ENCODE measurements at regions of chr2 and their contacts with region 1.

Region 1: DNA sequence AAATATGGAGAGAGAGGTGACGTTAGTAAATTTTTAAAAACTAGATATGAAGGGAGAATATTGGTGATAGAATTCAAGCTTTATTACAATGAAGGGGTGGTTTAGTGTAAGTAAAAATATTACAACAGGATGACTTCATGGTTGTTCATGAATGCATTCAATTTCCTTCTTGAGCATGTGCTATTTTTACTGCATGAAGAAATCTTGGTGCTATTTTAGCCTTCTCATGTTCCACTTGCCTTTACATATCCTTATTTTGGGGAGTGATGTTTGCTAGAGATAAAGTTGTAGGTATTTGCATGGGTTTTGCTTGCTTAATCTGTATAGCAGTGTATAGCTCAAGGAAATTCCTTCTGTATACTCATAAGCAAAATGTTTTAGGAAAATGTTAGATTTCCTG is 195.0 kb upstream of the MMADHC start:
- DNase-seq: no peak
- ATAC-seq: no peak
- H3K4me3 ChIP-seq: no peak overlapping the region
- H3K27ac ChIP-seq: no peak overlapping the region
- H3K4me1 ChIP-seq: no peaks in the 10 kb centered on the region
- H3K27me3 ChIP-seq: no peaks in the 10 kb centered on the region
- CTCF ChIP-seq: no peak
- POLR2A ChIP-seq: no peak

Region 2: DNA sequence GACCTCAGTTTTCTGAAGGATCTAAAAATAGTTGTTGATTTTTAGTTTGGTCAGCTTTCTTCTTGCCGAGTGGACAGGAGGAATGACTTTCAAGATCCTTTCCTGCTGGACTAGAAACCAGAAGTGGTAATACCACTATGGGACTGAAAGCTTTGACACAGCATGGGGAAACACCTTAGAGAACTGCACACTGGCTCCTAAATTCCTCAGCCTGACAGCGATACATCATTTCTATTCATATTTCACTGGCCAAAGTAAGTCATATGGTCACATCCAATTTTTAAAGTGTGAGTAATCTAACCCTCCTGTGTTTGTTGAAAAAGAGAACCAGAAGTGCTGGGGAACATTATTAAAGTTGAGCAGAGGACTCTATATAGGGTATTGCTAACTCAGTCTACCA is 49.8 kb after region 1 on chr2:
- intact Hi-C with region 1: loop called in 1 of 10 experiments (anchors 2 kb)
- DNase-seq: no peak
- ATAC-seq: no peak
- H3K4me3 ChIP-seq: no peak overlapping the region
- H3K27ac ChIP-seq: no peak overlapping the region
- H3K4me1 ChIP-seq: no peaks in the 10 kb centered on the region
- H3K27me3 ChIP-seq: no peaks in the 10 kb centered on the region
- CTCF ChIP-seq: no peak
- POLR2A ChIP-seq: no peak

Measured in heart left ventricle (tissue), 16 donors.